Activated T-helper 2 cell treated with anti-CD3 and anti-CD28 coated beads, Interferon-gamma antibody, Interleukin-2, Interleukin-4, amounts not matched to agents 10 μg/mL and 5 μg/mL and 100 μg/mL, durations not matched to agents 14 hours and 24 hours and 36 hours (primary cell): ENCODE measurements at regions of chr18 and their contacts with region 1.

Region 1: DNA sequence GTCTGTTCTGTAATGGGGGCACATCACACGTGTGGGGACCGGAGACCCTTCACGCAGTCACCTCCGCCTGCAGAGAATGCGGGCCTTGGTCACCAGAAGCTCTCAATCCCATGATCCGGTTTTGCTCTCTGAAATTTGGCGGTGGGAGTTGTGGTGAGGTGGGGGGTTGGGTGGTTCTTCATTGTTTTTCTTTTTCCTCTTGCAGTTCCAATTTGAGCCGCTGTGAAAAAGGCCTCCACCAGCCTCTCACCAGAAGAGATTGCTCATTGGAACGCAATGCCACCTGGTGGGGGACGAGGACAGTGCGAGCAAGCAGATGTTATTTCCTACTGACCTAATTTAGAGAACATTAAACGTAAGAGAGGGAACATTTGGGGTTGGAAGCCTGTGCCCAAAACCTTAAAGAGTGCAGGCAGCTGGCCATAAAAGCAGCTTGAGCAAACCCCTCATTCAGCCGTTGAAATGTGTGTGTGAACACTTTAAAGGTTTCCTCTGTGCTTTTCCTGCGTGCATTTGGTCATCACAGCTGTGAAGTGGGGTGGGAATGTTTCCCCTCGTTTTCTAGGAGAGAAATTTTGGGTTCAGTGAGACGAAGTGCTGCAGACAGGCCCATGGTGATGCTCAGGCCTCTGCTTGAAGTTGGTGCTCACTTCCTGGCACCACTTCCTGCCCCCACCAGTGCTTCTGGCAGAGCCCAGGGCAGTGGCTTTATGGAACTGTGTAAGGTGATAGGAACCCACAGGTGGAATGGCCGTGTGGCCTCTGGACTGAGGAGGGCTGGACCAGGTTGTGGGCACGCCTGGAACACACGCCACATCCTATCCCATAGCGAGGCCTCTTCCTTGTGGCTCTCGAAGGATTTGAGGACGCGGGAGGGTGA is 61.7 kb downstream of the ZCCHC2 start:
- DNase-seq: peak; percentile 77
- H3K4me3 Mint-ChIP-seq: peak overlapping the region; percentile 28
- H3K27ac Mint-ChIP-seq: peak overlapping the region; percentile 46
- H3K4me1 Mint-ChIP-seq: peaks cover 35% of the 10 kb centered on the region
- H3K27me3 Mint-ChIP-seq: no peaks in the 10 kb centered on the region

Region 2: DNA sequence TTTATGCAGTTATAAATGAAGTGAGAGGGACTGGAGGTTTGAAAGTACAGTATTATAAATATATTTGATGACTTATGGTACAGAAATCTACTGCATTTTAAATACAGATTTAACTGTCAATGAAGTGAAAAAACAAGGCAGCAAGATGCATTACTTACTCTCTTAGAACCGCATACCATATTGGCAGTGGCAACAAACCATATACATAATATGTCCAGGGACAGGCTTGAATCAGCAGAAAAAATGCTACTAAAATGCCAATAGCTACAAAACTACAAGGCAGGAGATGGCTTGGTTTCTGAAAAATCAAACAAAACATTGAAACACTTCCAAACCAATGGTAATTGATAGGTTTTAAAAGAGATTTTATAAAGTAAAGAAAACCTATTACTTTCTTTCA is 474.8 kb before region 1 on chr18:
- intact Hi-C with region 1: no loop called
- DNase-seq: no peak
- H3K4me3 Mint-ChIP-seq: no peak overlapping the region
- H3K27ac Mint-ChIP-seq: no peak overlapping the region
- H3K4me1 Mint-ChIP-seq: peaks cover 4% of the 10 kb centered on the region
- H3K27me3 Mint-ChIP-seq: no peaks in the 10 kb centered on the region

Region 3: GRCh38 chr18:62186774-62187542 is 397.5 kb before region 1 on chr18 and contains the starts of genes PIGN and RELCH:
- intact Hi-C with region 1: loop called (anchors 1 kb)
- DNase-seq: peak; percentile 94
- H3K4me3 Mint-ChIP-seq: peak within 1 kb of the TSS; percentile 97
- H3K27ac Mint-ChIP-seq: peak within 1 kb of the TSS; percentile 92
- H3K4me1 Mint-ChIP-seq: peaks cover 42% of the 10 kb centered on the region
- H3K27me3 Mint-ChIP-seq: no peaks in the 10 kb centered on the region
- total RNA-seq, gene PIGN: 29.4 and 29.6 TPM in 2 replicates
- total RNA-seq, gene RELCH: 29.1 and 32.3 TPM in 2 replicates

Region 4: GRCh38 chr18:62505669-62506494 is 78.6 kb before region 1 on chr18:
- intact Hi-C with region 1: loop called (anchors 1 kb)
- DNase-seq: peak; percentile 29
- H3K4me3 Mint-ChIP-seq: peak overlapping the region; percentile 73
- H3K27ac Mint-ChIP-seq: peak overlapping the region; percentile 97
- H3K4me1 Mint-ChIP-seq: peaks cover 20% of the 10 kb centered on the region
- H3K27me3 Mint-ChIP-seq: no peaks in the 10 kb centered on the region

Region 5: DNA sequence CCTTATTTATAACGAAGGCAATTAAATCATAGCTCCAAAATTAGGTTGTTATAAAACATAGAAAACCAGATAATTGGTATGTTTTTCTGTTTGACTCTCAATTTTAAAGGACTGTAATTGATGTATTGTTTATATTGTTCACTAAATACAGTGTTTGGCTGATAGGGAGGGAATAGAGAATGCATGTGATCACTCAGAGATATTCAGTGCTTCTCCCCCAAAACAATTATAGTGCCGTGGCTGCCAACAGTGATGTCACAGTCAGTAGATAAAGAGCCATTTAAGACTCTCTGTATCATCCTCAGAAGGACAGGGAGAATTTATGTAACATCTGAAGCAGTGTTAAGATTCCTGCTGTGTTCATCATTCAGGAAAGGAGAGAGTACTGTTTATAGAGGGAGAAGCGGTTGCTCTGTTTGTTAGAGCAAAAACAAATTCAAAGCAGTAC is 200.5 kb after region 1 on chr18:
- intact Hi-C with region 1: loop called (anchors 10 kb)
- DNase-seq: no peak
- H3K4me3 Mint-ChIP-seq: peak overlapping the region; percentile 38
- H3K27ac Mint-ChIP-seq: peak overlapping the region; percentile 93
- H3K4me1 Mint-ChIP-seq: peaks cover 77% of the 10 kb centered on the region
- H3K27me3 Mint-ChIP-seq: no peaks in the 10 kb centered on the region

Region 6: DNA sequence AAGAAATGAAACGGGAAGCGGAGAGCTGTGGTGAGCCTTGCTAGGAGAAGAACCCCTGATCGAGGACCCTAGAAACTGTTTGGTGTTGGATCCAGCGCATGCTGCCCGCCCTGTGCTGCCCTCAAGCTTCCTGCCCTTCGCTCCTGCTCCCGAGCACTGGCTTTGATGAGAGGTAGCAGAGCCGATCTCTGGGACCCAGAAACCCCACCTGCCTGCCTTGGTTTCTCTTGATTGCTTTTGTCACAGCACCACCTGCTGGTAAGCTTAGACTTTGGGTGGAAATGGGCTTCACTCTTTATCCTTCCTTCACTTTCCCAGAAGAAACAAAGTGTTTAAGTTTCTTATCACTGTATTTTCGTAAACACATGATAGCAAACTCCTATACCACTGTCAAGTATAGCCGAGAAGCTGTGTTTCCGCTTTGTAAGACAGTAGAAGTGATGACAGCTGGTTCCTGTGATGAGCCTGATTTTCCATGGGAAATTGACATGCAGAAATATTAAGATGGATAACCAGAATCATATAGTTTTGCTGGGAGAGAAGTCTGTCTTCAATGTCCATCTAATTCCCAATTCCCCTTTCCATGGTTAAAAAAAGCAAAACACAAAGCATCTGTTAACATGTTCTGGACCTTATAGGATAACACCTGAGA is 398.2 kb after region 1 on chr18:
- intact Hi-C with region 1: loop called (anchors 1 kb)
- DNase-seq: peak; percentile 42
- H3K4me3 Mint-ChIP-seq: no peak overlapping the region
- H3K27ac Mint-ChIP-seq: no peak overlapping the region
- H3K4me1 Mint-ChIP-seq: peaks cover 4% of the 10 kb centered on the region
- H3K27me3 Mint-ChIP-seq: no peaks in the 10 kb centered on the region